Caco-2 (cell line): ENCODE measurements at regions of chr7 and their contacts with region 1.

Region 1: GRCh38 chr7:135930565-135931461 is 46.3 kb downstream of the MTPN start:
- DNase-seq: peak in 1 of 2 experiments; percentile 16
- H3K4me3 ChIP-seq: no peak overlapping the region
- H3K4me3 Mint-ChIP-seq: peak overlapping the region; percentile 27
- H3K27ac Mint-ChIP-seq: peak overlapping the region; percentile 66
- H3K4me1 ChIP-seq: peaks cover 56% of the 10 kb centered on the region
- H3K4me1 Mint-ChIP-seq: peaks cover 50% of the 10 kb centered on the region
- H3K27me3 ChIP-seq: no peaks in the 10 kb centered on the region
- H3K27me3 Mint-ChIP-seq: no peaks in the 10 kb centered on the region
- CTCF ChIP-seq: no peak

Region 2: GRCh38 chr7:135728136-135728669 is 202.6 kb before region 1 on chr7 and contains the start of gene SLC13A4:
- CTCF ChIA-PET with region 1: no interaction called
- POLR2A ChIA-PET with region 1: no interaction called
- intact Hi-C with region 1: no loop called
- DNase-seq: no peak
- H3K4me3 ChIP-seq: no peak within 1 kb of the TSS
- H3K4me3 Mint-ChIP-seq: no peak within 1 kb of the TSS
- H3K27ac Mint-ChIP-seq: no peak within 1 kb of the TSS
- H3K4me1 ChIP-seq: no peaks in the 10 kb centered on the region
- H3K4me1 Mint-ChIP-seq: no peaks in the 10 kb centered on the region
- H3K27me3 ChIP-seq: no peaks in the 10 kb centered on the region
- H3K27me3 Mint-ChIP-seq: no peaks in the 10 kb centered on the region
- CTCF ChIP-seq: no peak
- total RNA-seq, gene SLC13A4: not detected in 2 replicates

Region 3: GRCh38 chr7:135801045-135801693 is 129.6 kb before region 1 on chr7:
- CTCF ChIA-PET with region 1: no interaction called
- POLR2A ChIA-PET with region 1: no interaction called
- intact Hi-C with region 1: loop called (anchors 1 kb)
- DNase-seq: peak in 1 of 2 experiments; percentile 74
- H3K4me3 ChIP-seq: no peak overlapping the region
- H3K4me3 Mint-ChIP-seq: no peak overlapping the region
- H3K27ac Mint-ChIP-seq: no peak overlapping the region
- H3K4me1 ChIP-seq: 0 out of 2 replicates have a peak, but pooled peaks cover 6% of the 10 kb centered on the region
- H3K4me1 Mint-ChIP-seq: peaks cover 15% of the 10 kb centered on the region
- H3K27me3 ChIP-seq: no peaks in the 10 kb centered on the region
- H3K27me3 Mint-ChIP-seq: no peaks in the 10 kb centered on the region
- CTCF ChIP-seq: peak; percentile 78 to 88

Region 4: GRCh38 chr7:135825406-135825805 is 105.4 kb before region 1 on chr7:
- CTCF ChIA-PET with region 1: no interaction called
- POLR2A ChIA-PET with region 1: no interaction called
- intact Hi-C with region 1: loop called (anchors 5 kb)
- DNase-seq: no peak
- H3K4me3 ChIP-seq: no peak overlapping the region
- H3K4me3 Mint-ChIP-seq: no peak overlapping the region
- H3K27ac Mint-ChIP-seq: no peak overlapping the region
- H3K4me1 ChIP-seq: peaks cover 12% of the 10 kb centered on the region
- H3K4me1 Mint-ChIP-seq: peaks cover 19% of the 10 kb centered on the region
- H3K27me3 ChIP-seq: no peaks in the 10 kb centered on the region
- H3K27me3 Mint-ChIP-seq: no peaks in the 10 kb centered on the region
- CTCF ChIP-seq: no peak

Region 5: GRCh38 chr7:135877805-135878204 is 53.0 kb before region 1 on chr7:
- CTCF ChIA-PET with region 1: no interaction called
- POLR2A ChIA-PET with region 1: no interaction called
- intact Hi-C with region 1: loop called (anchors 2 kb)
- DNase-seq: peak; percentile 76 to 77
- H3K4me3 ChIP-seq: no peak overlapping the region
- H3K4me3 Mint-ChIP-seq: peak overlapping the region; percentile 23
- H3K27ac Mint-ChIP-seq: no peak overlapping the region
- H3K4me1 ChIP-seq: peaks cover 17% of the 10 kb centered on the region
- H3K4me1 Mint-ChIP-seq: peaks cover 16% of the 10 kb centered on the region
- H3K27me3 ChIP-seq: no peaks in the 10 kb centered on the region
- H3K27me3 Mint-ChIP-seq: no peaks in the 10 kb centered on the region
- CTCF ChIP-seq: no peak

Region 6: DNA sequence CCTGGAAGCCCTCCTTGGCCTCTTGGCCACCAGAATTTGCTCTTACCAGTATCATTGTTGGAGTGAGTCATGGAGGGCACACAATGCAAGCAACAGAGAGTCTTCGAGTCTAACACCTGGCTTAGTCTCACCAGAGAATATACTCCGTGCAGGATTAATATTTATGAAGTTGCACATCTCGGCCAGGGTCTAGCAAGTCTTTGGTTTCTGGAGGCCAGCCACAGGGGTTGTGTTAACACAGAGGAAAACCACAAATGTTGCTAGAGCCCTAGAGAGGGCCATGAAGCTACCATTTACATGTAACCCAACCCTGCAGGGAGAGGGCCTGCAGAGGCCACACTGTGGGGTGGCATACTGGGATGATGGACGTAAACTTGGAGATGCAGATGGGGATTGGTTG is 25.5 kb before region 1 on chr7:
- CTCF ChIA-PET with region 1: no interaction called
- POLR2A ChIA-PET with region 1: no interaction called
- intact Hi-C with region 1: loop called (anchors 2 kb)
- DNase-seq: no peak
- H3K4me3 ChIP-seq: no peak overlapping the region
- H3K4me3 Mint-ChIP-seq: no peak overlapping the region
- H3K27ac Mint-ChIP-seq: no peak overlapping the region
- H3K4me1 ChIP-seq: no peaks in the 10 kb centered on the region
- H3K4me1 Mint-ChIP-seq: peaks cover 13% of the 10 kb centered on the region
- H3K27me3 ChIP-seq: no peaks in the 10 kb centered on the region
- H3K27me3 Mint-ChIP-seq: no peaks in the 10 kb centered on the region
- CTCF ChIP-seq: no peak

Region 7: GRCh38 chr7:135977007-135977741 is 46.4 kb after region 1 on chr7 and contains the start of gene MTPN:
- CTCF ChIA-PET with region 1: no interaction called
- POLR2A ChIA-PET with region 1: no interaction called
- intact Hi-C with region 1: loop called (anchors 1 kb)
- DNase-seq: peak; percentile 99
- H3K4me3 ChIP-seq: peak within 1 kb of the TSS; percentile 90
- H3K4me3 Mint-ChIP-seq: peak within 1 kb of the TSS; percentile 79
- H3K27ac Mint-ChIP-seq: peak within 1 kb of the TSS; percentile 70
- H3K4me1 ChIP-seq: peaks cover 11% of the 10 kb centered on the region
- H3K4me1 Mint-ChIP-seq: peaks cover 35% of the 10 kb centered on the region
- H3K27me3 ChIP-seq: no peaks in the 10 kb centered on the region
- H3K27me3 Mint-ChIP-seq: no peaks in the 10 kb centered on the region
- CTCF ChIP-seq: no peak
- total RNA-seq, gene MTPN: 136 and 138 TPM in 2 replicates

Region 8: DNA sequence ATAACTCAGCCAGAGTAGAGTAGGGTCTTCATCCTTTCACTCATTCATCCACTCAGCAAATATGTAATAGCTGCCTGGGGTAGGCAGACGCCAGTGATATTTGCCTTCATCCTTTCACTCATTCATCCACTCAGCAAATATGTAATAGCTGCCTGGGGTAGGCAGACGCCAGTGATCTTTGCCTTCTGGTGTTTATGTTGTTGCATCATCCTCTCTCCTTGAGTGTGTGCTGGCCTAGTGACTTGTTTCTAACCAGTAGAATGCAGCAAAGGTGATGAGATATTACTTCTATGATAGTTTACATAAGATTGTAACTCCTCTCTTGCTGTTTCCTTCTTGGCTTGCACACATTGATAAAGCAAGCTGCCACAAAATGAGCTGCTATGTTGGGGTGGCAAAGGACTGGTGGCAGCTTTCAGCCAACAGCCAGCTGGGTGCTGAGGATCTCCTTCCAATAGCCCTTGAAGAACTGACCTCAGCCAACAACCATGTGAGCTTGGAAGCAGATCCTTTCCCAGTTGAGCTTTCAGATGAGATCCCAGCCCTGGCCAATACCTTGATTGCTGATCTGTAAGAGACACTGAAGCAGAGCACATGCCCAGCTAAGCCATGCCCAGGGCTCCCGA is 69.6 kb after region 1 on chr7:
- CTCF ChIA-PET with region 1: no interaction called
- POLR2A ChIA-PET with region 1: no interaction called
- intact Hi-C with region 1: loop called (anchors 2 kb)
- DNase-seq: peak; percentile 52 to 67
- H3K4me3 ChIP-seq: no peak overlapping the region
- H3K4me3 Mint-ChIP-seq: no peak overlapping the region
- H3K27ac Mint-ChIP-seq: peak overlapping the region; percentile 81
- H3K4me1 ChIP-seq: peaks cover 13% of the 10 kb centered on the region
- H3K4me1 Mint-ChIP-seq: peaks cover 10% of the 10 kb centered on the region
- H3K27me3 ChIP-seq: no peaks in the 10 kb centered on the region
- H3K27me3 Mint-ChIP-seq: no peaks in the 10 kb centered on the region
- CTCF ChIP-seq: no peak